ENCODE measurements at regions of chr1 and their contacts with region 1.

Region 1: DNA sequence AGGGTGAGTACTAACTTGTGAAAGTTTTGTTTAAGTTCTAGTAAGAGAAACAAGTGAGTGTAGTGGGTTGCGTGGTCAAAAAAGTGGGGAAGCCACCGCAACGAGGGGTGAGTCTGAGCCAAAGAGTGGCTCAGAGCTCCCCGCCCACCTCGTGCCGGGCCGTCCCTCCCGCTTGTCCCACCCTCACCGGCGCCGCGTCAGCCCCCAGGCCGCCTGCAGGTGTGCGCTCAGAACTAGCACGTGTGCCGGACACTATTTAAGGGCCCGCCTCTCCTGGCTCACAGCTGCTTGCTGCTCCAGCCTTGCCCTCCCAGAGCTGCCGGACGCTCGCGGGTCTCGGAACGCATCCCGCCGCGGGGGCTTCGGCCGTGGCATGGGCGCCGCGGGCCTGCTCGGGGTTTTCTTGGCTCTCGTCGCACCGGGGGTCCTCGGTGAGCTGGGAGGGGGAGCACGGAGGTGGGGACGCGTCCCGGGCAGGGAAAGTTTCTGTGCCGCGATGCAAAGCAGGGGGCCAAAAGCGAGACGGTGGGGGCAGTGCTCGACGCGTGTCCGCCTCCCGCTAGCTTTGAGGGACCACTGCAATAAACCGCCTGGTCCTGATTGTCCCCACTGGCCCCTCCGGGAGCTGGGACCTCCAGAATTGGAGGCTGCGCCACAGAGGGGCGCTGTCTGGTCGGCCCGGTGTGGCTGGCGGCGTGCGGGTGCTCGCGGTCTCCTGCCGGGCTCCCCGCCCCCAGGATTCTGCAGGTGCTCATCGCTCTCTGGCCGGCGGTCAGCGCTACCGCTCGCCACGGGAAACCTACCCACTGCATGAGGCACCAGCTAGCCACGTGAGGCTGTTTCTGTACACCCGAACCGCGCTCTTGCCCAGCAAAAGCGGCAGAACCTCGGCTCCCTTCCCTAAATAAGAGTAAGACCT is at the start of gene CR2:
- DNase-seq: peak in 3 of 5 donors; percentile 12 to 34 (median 22)
- H3K4me3 ChIP-seq: no peak within 1 kb of the TSS
- H3K27ac ChIP-seq: no peak within 1 kb of the TSS
- H3K4me1 ChIP-seq: no peaks in the 10 kb centered on the region
- H3K27me3 ChIP-seq: no peaks in the 10 kb centered on the region
- CTCF ChIP-seq: no peak
- EP300 ChIP-seq: no peak
- POLR2A ChIP-seq: no peak
- total RNA-seq, gene CR2: 0.08 to 0.27 TPM in 2 of 7 donors, not detected in the others

Region 2: DNA sequence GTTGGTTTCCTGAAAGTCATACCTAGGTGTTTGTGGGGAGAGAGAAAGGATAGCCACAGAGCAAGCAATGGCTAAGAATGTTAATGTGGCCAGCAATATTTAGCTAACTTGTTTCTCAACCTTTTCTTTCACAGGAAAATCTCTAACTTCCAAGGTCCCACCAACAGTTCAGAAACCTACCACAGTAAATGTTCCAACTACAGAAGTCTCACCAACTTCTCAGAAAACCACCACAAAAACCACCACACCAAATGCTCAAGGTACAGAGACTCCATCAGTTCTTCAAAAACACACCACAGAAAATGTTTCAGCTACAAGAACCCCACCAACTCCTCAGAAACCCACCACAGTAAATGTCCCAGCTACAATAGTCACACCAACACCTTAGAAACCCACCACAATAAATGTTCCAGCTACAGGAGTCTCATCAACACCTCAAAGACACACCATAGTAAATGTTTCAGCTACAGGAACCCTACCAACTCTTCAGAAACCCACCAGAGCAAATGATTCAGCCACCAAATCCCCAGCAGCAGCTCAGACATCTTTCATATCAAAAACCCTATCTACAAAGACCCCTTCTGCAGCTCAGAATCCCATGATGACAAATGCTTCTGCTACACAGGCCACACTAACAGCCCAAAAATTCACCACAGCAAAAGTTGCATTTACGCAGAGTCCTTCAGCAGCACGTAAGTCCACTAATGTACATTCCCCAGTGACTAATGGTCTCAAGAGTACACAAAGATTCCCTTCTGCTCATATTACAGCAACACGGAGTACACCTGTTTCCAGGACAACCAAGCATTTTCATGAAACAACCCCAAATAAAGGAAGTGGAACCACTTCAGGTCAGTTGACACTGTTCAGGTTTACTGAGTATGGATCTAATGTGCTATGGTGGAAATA is 117.5 kb before region 1 on chr1:
- intact Hi-C with region 1: no loop called
- DNase-seq: no peak
- H3K4me3 ChIP-seq: no peak overlapping the region
- H3K27ac ChIP-seq: no peak overlapping the region
- H3K4me1 ChIP-seq: no peaks in the 10 kb centered on the region
- H3K27me3 ChIP-seq: no peaks in the 10 kb centered on the region
- CTCF ChIP-seq: no peak
- EP300 ChIP-seq: no peak
- POLR2A ChIP-seq: no peak

Region 3: DNA sequence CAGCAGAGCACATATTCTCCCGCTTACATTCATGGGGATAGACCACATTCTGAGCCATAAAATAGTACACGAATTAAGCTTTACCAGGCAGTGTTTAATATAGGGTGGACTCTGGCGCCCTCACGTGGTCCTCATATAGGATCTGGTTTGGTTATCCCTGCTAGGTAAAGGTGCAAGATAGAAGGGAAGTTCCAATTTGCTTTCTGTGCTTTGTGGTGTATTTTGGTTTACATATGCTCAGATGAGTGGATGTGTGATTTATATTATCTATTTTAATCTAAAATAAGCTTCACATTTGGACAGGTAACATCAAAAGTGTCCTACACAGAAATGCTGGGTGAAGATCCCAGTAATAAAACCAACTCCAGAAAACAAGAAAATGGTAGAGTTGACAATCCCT is 45.3 kb after region 1 on chr1:
- intact Hi-C with region 1: loop called in 1 of 4 experiments (anchors 1 kb)
- DNase-seq: peak; percentile 23 to 66 (median 51)
- H3K4me3 ChIP-seq: no peak overlapping the region
- H3K27ac ChIP-seq: no peak overlapping the region
- H3K4me1 ChIP-seq: no peaks in the 10 kb centered on the region
- H3K27me3 ChIP-seq: no peaks in the 10 kb centered on the region
- CTCF ChIP-seq: peak in 1 of 3 donors; percentile 39
- EP300 ChIP-seq: no peak
- POLR2A ChIP-seq: no peak

Region 4: GRCh38 chr1:207518608-207519239 is 64.4 kb after region 1 on chr1:
- intact Hi-C with region 1: no loop called
- DNase-seq: no peak
- H3K4me3 ChIP-seq: no peak overlapping the region
- H3K27ac ChIP-seq: no peak overlapping the region
- H3K4me1 ChIP-seq: no peaks in the 10 kb centered on the region
- H3K27me3 ChIP-seq: no peaks in the 10 kb centered on the region
- CTCF ChIP-seq: no peak
- EP300 ChIP-seq: no peak
- POLR2A ChIP-seq: no peak

Measured in ovary (tissue), 10 donors.